ENCODE measurements at regions of chr10 and their contacts with region 1.

Region 1: GRCh38 chr10:91908337-91909116 is 759 bp downstream of the FGFBP3 start:
- DNase-seq: peak; percentile 80
- ATAC-seq: peak; percentile 88
- H3K4me3 Mint-ChIP-seq: peak overlapping the region; percentile 91
- H3K27ac Mint-ChIP-seq: peak overlapping the region; percentile 88
- H3K4me1 Mint-ChIP-seq: peaks cover 25% of the 10 kb centered on the region
- H3K27me3 Mint-ChIP-seq: peaks cover 3% of the 10 kb centered on the region
- CTCF ChIP-seq: peak; percentile 19

Region 2: DNA sequence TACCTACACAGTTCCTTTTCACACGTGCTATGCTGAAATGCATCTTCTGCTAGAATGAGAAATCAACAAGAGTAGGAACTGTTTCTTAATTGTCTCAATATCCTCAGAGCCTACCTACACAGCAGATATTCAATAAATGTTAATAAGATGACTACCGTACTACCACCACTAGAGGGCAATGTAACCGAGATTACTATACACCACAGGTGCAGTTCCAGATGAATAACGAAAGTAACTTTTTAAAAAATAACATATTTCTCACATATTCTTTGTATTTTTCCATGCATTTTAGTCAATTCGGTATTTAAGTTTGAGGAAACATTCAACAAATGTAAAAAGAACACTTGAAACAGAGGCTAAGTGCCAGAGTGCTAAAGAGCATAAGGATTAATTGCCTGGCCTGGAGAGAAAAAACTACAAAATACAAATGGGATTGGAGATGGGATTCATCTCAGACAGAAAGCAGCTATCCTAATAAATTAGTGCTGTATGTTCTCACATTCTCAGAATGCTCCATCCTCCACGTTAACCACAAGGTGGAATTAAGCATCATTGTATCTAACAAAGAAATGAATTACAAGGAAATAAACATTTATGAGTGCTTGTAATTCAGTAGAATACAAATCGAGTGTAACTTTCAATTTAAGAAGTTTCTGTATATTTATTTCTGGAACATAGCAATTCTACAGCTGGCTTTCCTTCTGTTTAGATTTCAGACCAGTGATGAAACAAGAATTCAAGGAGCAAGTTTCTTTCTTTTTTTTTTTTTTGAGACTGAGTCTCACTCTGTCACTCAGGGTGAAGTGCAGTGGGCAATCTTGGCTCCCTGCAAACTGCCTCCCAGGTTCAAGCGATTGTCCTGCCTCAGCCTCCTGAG is 518.7 kb before region 1 on chr10:
- CTCF ChIA-PET with region 1: interaction called, 4 read pairs
- POLR2A ChIA-PET with region 1: no interaction called
- intact Hi-C with region 1: loop called (anchors 10 kb)
- DNase-seq: no peak
- ATAC-seq: peak; percentile 87
- H3K4me3 Mint-ChIP-seq: no peak overlapping the region
- H3K27ac Mint-ChIP-seq: no peak overlapping the region
- H3K4me1 Mint-ChIP-seq: peaks cover 5% of the 10 kb centered on the region
- H3K27me3 Mint-ChIP-seq: peaks cover 24% of the 10 kb centered on the region
- CTCF ChIP-seq: peak; percentile 76

Region 3: GRCh38 chr10:91758303-91759146 is 150.0 kb before region 1 on chr10:
- CTCF ChIA-PET with region 1: interaction called, 62 read pairs
- POLR2A ChIA-PET with region 1: no interaction called
- intact Hi-C with region 1: loop called (anchors 2 kb)
- DNase-seq: no peak
- ATAC-seq: peak; percentile 65
- H3K4me3 Mint-ChIP-seq: no peak overlapping the region
- H3K27ac Mint-ChIP-seq: no peak overlapping the region
- H3K4me1 Mint-ChIP-seq: peaks cover 2% of the 10 kb centered on the region
- H3K27me3 Mint-ChIP-seq: peaks cover 18% of the 10 kb centered on the region
- CTCF ChIP-seq: peak; percentile 67

Region 4: DNA sequence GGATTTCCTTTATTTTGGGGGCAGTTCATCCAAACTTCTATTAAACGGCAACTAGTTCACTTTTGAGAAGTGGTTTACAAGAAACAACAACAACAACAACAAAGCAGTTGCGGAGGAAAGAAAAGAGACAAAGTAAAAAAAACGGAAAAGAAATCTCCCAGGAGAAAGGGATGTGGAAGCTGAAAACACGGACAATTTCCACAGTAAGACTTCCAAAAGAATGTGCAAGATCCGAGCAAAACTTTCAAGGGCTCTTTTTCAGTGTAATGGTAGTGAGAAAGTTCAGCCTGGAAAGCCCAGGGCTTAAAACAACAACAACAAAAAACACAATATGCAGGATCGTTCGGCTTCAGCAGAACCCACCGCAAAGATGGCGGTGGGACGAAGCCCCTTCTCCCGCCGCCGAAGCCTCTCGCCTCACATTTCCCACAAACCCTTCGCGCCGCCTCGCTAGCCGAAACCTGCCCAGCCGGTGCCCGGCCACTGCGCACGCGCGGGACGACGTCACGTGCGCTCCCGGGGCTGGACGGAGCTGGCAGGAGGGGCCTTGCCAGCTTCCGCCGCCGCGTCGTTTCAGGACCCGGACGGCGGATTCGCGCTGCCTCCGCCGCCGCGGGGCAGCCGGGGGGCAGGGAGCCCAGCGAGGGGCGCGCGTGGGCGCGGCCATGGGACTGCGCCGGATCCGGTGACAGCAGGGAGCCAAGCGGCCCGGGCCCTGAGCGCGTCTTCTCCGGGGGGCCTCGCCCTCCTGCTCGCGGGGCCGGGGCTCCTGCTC is 110.5 kb before region 1 on chr10 and contains the start of gene TNKS2:
- CTCF ChIA-PET with region 1: interaction called, 9 read pairs
- POLR2A ChIA-PET with region 1: interaction called, 5 read pairs
- intact Hi-C with region 1: loop called (anchors 2 kb)
- DNase-seq: peak; percentile 93
- ATAC-seq: peak; percentile 67
- H3K4me3 Mint-ChIP-seq: peak within 1 kb of the TSS; percentile 89
- H3K27ac Mint-ChIP-seq: peak within 1 kb of the TSS; percentile 99
- H3K4me1 Mint-ChIP-seq: peaks cover 51% of the 10 kb centered on the region
- H3K27me3 Mint-ChIP-seq: no peaks in the 10 kb centered on the region
- CTCF ChIP-seq: no peak
- total RNA-seq, gene TNKS2: 22.1 to 22.8 TPM

Region 5: DNA sequence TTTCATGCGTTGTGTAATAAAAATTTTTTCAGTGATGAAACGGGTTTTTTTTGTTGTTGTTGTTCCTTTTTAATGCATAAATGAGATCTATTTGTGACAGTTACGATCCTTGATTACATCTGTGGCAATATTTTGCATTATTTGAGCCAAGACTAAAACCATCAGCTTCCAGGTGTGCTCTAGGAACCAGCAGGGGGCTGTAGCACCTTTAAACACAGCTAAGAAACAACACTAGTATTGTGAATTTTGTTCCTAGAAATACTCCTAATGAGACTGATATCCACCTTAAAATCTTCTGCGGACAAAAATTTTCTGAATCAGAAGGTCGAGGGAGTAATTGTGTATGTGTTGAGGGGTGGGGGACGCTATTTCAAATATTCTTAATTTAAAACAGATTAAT is 51.9 kb before region 1 on chr10:
- CTCF ChIA-PET with region 1: interaction called, 9 read pairs
- POLR2A ChIA-PET with region 1: no interaction called
- intact Hi-C with region 1: loop called (anchors 5 kb)
- DNase-seq: peak; percentile 26
- ATAC-seq: no peak
- H3K4me3 Mint-ChIP-seq: no peak overlapping the region
- H3K27ac Mint-ChIP-seq: no peak overlapping the region
- H3K4me1 Mint-ChIP-seq: peaks cover 3% of the 10 kb centered on the region
- H3K27me3 Mint-ChIP-seq: no peaks in the 10 kb centered on the region
- CTCF ChIP-seq: peak; percentile 36

Region 6: DNA sequence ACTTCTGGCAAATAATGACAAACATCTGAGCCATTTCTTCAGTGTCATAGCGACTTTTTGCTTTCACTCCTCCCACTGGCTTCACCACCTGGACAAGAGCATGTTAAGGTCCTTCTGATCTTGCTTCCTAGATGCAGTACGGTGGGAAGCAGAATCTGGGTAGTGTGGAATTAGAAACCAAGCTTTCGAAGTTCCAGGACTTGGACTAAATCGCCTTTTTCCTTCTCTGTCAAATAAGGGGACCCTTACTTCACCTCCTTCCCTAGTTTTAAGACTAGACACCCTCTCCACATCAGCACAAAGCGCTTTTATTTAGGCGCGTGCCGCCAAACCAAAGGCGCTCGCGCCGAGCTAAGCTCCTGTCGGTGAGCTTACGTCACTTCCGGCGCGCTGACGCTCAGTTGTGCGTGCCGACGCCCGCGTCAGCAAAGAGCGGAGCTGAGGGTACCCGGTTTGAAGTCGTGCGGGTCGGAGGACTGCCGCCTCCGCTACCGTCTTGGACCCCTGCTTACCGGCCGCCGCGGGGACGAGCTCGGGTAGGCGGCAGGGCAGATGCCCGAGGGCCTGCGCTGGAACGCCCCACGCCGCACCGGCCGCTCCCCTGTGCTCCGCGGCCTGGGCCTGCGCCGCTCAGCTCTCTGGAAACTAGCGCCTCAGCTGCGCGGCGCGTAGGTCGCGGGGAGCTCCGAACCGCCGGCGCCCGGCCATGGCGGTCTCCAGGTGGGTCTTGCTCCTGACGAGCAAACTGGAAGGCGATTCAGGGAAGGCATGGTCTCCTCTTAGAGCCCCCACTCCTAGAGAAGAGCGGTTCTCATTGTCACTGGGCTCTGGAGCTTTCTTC is 15.1 kb after region 1 on chr10 and contains the start of gene BTAF1:
- CTCF ChIA-PET with region 1: interaction called, 18 read pairs
- POLR2A ChIA-PET with region 1: interaction called, 23 read pairs
- intact Hi-C with region 1: no loop called
- DNase-seq: peak; percentile 95
- ATAC-seq: peak; percentile 95
- H3K4me3 Mint-ChIP-seq: peak within 1 kb of the TSS; percentile 95
- H3K27ac Mint-ChIP-seq: peak within 1 kb of the TSS; percentile 99
- H3K4me1 Mint-ChIP-seq: peaks cover 35% of the 10 kb centered on the region
- H3K27me3 Mint-ChIP-seq: peaks cover 2% of the 10 kb centered on the region
- CTCF ChIP-seq: no peak
- total RNA-seq, gene BTAF1: 73.4 to 75.3 TPM

Region 7: DNA sequence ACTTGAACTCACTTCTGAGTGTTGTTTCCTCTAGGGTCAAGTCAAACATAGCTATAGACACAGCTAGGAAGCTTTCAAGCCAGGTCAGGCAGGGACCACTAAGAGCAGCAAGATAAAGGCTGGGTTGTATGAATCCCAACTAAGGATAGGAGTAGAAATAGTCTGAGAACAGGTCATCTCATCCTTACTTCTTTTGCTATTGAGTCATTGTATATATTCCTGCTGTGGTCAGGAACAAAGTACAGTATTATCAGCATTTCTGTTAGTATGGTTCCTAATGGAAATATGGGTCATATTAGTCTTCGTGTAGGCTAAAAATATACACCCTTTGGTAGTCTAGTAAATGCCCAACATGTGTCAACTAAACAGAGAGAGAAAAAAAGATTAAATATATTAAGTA is 160.4 kb after region 1 on chr10:
- CTCF ChIA-PET with region 1: no interaction called
- POLR2A ChIA-PET with region 1: no interaction called
- intact Hi-C with region 1: no loop called
- DNase-seq: no peak
- ATAC-seq: no peak
- H3K4me3 Mint-ChIP-seq: no peak overlapping the region
- H3K27ac Mint-ChIP-seq: no peak overlapping the region
- H3K4me1 Mint-ChIP-seq: no peaks in the 10 kb centered on the region
- H3K27me3 Mint-ChIP-seq: no peaks in the 10 kb centered on the region
- CTCF ChIP-seq: no peak

Region 8: GRCh38 chr10:92103376-92104090 is 195.0 kb after region 1 on chr10:
- CTCF ChIA-PET with region 1: no interaction called
- POLR2A ChIA-PET with region 1: no interaction called
- intact Hi-C with region 1: no loop called
- DNase-seq: no peak
- ATAC-seq: no peak
- H3K4me3 Mint-ChIP-seq: no peak overlapping the region
- H3K27ac Mint-ChIP-seq: no peak overlapping the region
- H3K4me1 Mint-ChIP-seq: peaks cover 13% of the 10 kb centered on the region
- H3K27me3 Mint-ChIP-seq: no peaks in the 10 kb centered on the region
- CTCF ChIP-seq: no peak

Region 9: GRCh38 chr10:92164036-92164696 is 255.6 kb after region 1 on chr10:
- CTCF ChIA-PET with region 1: no interaction called
- POLR2A ChIA-PET with region 1: no interaction called
- intact Hi-C with region 1: no loop called
- DNase-seq: no peak
- ATAC-seq: no peak
- H3K4me3 Mint-ChIP-seq: no peak overlapping the region
- H3K27ac Mint-ChIP-seq: no peak overlapping the region
- H3K4me1 Mint-ChIP-seq: no peaks in the 10 kb centered on the region
- H3K27me3 Mint-ChIP-seq: no peaks in the 10 kb centered on the region
- CTCF ChIP-seq: no peak